Activated CD4-positive, alpha-beta memory T cell treated with anti-CD3 and anti-CD28 coated beads, Interleukin-2, amount 10 ng/mL, durations not matched to agents 7 days and 5 days (primary cell): ENCODE measurements at regions of chr5 and their contacts with region 1.

Region 1: DNA sequence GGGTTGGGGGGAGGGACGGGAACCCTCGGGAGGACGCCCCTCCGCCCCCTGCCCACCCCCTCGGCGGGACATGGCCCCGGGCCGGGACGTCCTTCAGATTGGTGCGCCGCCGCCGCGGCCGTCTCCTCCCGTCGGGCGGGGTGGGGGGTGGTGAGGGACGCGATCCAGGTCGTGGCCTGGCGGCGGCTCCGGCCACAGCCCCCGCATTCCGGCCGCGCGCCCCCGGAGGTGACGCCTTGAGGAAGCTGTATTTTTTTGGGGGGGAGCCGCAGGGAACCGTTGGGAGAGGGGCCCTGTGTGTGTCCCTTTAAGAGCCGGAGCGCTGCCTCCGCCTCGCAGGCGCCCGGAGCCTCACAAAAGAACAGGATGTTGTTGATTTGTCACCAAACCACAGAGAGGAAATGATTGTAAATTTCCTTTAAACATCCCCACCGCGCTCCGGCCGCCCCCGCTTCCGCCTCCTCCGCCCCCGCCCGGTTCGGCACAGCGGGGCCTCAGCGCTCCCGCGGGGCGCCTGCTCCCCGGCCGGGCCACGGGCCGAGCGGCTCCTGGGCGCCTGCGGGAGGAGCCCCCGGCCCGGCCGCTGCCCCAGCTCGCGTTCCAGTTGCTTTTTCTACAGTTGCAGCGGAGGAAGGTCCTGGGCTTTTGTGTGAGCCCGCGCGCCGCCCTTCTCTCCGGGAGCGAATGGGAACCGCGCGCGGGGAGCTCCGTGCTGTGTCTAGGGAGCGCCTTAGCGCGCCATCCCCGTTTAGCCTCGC is 32.1 kb upstream of the SPRY4 start:
- DNase-seq: peak; percentile 93
- H3K4me3 Mint-ChIP-seq: peak overlapping the region; percentile 77
- H3K27ac Mint-ChIP-seq: peak overlapping the region; percentile 91
- H3K4me1 Mint-ChIP-seq: peaks cover 41% of the 10 kb centered on the region
- H3K27me3 Mint-ChIP-seq: no peaks in the 10 kb centered on the region

Region 2: GRCh38 chr5:141898448-141899049 is 458.3 kb before region 1 on chr5:
- CTCF ChIA-PET with region 1: no interaction called
- POLR2A ChIA-PET with region 1: no interaction called
- DNase-seq: no peak
- H3K4me3 Mint-ChIP-seq: no peak overlapping the region
- H3K27ac Mint-ChIP-seq: no peak overlapping the region
- H3K4me1 Mint-ChIP-seq: no peaks in the 10 kb centered on the region
- H3K27me3 Mint-ChIP-seq: peaks cover 27% of the 10 kb centered on the region

Region 3: GRCh38 chr5:142059294-142059940 is 297.5 kb before region 1 on chr5:
- CTCF ChIA-PET with region 1: no interaction called
- POLR2A ChIA-PET with region 1: no interaction called
- DNase-seq: no peak
- H3K4me3 Mint-ChIP-seq: no peak overlapping the region
- H3K27ac Mint-ChIP-seq: no peak overlapping the region
- H3K4me1 Mint-ChIP-seq: peaks cover 14% of the 10 kb centered on the region
- H3K27me3 Mint-ChIP-seq: no peaks in the 10 kb centered on the region

Region 4: GRCh38 chr5:142246258-142246657 is 110.6 kb before region 1 on chr5:
- CTCF ChIA-PET with region 1: no interaction called
- POLR2A ChIA-PET with region 1: no interaction called
- DNase-seq: no peak
- H3K4me3 Mint-ChIP-seq: no peak overlapping the region
- H3K27ac Mint-ChIP-seq: no peak overlapping the region
- H3K4me1 Mint-ChIP-seq: no peaks in the 10 kb centered on the region
- H3K27me3 Mint-ChIP-seq: peaks cover 2% of the 10 kb centered on the region

Region 5: GRCh38 chr5:142324871-142325724 is 31.8 kb before region 1 on chr5 and contains the start of gene SPRY4:
- CTCF ChIA-PET with region 1: interaction called, 5 read pairs
- POLR2A ChIA-PET with region 1: interaction called, 22 read pairs
- DNase-seq: peak; percentile 86
- H3K4me3 Mint-ChIP-seq: peak within 1 kb of the TSS; percentile 74
- H3K27ac Mint-ChIP-seq: peak within 1 kb of the TSS; percentile 59
- H3K4me1 Mint-ChIP-seq: peaks cover 30% of the 10 kb centered on the region
- H3K27me3 Mint-ChIP-seq: peaks cover 34% of the 10 kb centered on the region
- total RNA-seq, gene SPRY4: 0.86 to 1.3 TPM

Region 6: DNA sequence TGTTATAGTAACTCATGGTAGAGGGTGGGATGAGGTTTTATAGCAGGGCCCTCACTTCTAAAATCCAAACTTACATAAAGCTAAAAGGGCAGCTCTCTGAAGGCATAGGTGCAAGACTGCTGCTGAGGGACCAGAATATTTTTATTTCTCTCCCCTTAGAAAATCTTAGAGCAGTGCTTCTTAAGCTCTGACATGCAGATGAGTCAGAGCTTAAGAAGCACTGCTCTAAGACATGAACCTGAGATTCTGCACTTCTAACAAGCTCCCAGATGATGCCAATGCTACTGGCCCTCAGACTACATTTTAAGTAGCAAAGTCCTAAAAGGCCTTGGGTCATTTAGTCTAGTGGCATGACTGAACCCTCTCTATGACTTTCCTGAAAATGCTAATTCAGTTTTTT is 65.5 kb after region 1 on chr5:
- CTCF ChIA-PET with region 1: no interaction called
- POLR2A ChIA-PET with region 1: interaction called, 23 read pairs
- DNase-seq: no peak
- H3K4me3 Mint-ChIP-seq: no peak overlapping the region
- H3K27ac Mint-ChIP-seq: no peak overlapping the region
- H3K4me1 Mint-ChIP-seq: peaks cover 60% of the 10 kb centered on the region
- H3K27me3 Mint-ChIP-seq: no peaks in the 10 kb centered on the region

Region 7: DNA sequence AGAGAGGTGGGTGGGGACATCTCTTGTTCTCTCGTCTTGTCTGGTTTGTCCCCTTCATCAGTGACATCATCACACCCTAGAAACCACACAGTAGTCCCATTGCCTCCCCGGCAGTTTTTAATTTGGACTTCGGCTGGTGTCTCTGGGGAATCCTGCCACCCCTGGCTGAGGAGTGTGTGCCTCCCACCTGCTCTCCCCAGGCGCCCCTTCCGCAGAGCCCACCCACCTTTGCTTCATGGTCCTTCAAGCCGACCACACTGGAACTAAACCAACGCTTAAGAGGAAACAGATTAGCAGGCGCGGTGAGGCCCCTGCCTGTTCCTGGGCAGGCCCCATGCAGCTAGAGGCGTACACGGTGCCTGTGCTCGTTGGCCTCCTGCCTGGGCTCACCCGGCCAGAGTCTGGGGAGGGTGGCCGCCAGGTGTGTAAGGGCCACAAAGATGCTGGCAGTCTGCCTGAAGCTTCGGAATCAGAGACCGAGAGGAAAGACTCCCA is 75.5 kb after region 1 on chr5:
- CTCF ChIA-PET with region 1: no interaction called
- POLR2A ChIA-PET with region 1: interaction called, 28 read pairs
- DNase-seq: peak; percentile 54
- H3K4me3 Mint-ChIP-seq: peak overlapping the region; percentile 62
- H3K27ac Mint-ChIP-seq: peak overlapping the region; percentile 94
- H3K4me1 Mint-ChIP-seq: peaks cover 46% of the 10 kb centered on the region
- H3K27me3 Mint-ChIP-seq: no peaks in the 10 kb centered on the region

Region 8: GRCh38 chr5:142512043-142513042 is 155.4 kb after region 1 on chr5:
- CTCF ChIA-PET with region 1: no interaction called
- POLR2A ChIA-PET with region 1: no interaction called
- DNase-seq: no peak
- H3K4me3 Mint-ChIP-seq: no peak overlapping the region
- H3K27ac Mint-ChIP-seq: no peak overlapping the region
- H3K4me1 Mint-ChIP-seq: peaks cover 12% of the 10 kb centered on the region
- H3K27me3 Mint-ChIP-seq: no peaks in the 10 kb centered on the region